ENCODE measurements at regions of chr1 and their contacts with region 1.

Region 1: GRCh38 chr1:89454845-89455521 is 69.6 kb upstream of the LRRC8B start:
- DNase-seq: peak; percentile 71
- H3K4me3 Mint-ChIP-seq: no peak overlapping the region
- H3K27ac Mint-ChIP-seq: no peak overlapping the region
- H3K4me1 Mint-ChIP-seq: peaks cover 22% of the 10 kb centered on the region
- H3K27me3 Mint-ChIP-seq: peaks cover 21% of the 10 kb centered on the region

Region 2: DNA sequence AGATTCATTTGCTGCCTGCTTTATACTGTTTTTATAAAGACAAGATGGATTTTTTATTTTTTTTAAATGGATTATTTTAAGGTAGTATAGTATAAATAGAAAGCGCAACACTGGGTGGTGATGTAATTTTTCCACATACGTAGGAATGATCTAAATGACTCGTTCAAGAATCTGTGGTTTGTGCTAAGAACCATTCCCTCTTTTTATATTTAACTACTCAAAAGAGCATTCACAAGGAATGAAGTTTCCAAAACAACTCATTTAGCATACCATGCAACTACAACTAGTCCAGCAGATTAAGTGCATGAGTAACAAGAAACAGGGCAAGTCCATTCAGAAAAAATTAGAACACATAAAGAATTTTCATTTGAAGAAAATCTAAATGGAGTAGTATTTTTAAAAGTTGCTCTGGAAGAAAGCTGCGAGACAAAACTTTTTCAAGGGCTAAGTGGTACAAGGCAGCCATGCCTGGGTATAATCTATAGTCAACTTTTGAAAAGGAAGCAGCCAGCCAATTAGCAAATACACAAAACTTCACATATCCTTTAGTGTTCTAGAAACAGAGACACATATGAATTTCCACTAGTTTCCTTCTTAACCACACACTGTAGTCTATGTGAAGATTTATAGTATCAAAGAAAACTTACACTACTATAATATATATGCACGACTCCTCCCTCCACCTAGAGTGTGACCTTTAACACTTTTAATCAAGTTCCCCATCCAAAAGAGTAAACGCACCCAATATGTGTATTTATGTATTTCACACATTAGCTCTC is 587.1 kb before region 1 on chr1:
- CTCF ChIA-PET with region 1: no interaction called
- POLR2A ChIA-PET with region 1: no interaction called
- intact Hi-C with region 1: loop called (anchors 1 kb)
- DNase-seq: no peak
- H3K4me3 Mint-ChIP-seq: no peak overlapping the region
- H3K27ac Mint-ChIP-seq: peak overlapping the region; percentile 62
- H3K4me1 Mint-ChIP-seq: peaks cover 41% of the 10 kb centered on the region
- H3K27me3 Mint-ChIP-seq: no peaks in the 10 kb centered on the region

Region 3: DNA sequence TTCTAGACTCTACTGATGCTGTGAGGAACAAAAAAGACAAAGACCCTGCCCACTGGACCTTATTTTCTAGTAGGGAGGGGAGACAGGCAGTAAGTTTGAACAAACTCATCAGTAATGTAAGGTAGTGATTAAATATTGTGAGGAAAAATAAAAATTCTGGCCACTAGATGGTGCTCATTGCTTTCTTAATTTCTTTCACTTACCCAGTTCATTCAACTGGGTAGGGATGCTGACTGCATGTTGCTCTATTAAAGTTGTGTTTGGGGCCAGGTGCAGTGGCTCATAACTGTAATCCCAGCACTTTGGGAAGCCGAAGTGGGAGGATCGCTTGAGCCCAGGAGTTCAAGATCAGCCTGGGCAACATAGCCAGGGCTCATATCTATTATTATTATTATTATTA is 456.3 kb before region 1 on chr1:
- CTCF ChIA-PET with region 1: interaction called, 22 read pairs
- POLR2A ChIA-PET with region 1: no interaction called
- intact Hi-C with region 1: loop called (anchors 1 kb)
- DNase-seq: no peak
- H3K4me3 Mint-ChIP-seq: no peak overlapping the region
- H3K27ac Mint-ChIP-seq: no peak overlapping the region
- H3K4me1 Mint-ChIP-seq: peaks cover 27% of the 10 kb centered on the region
- H3K27me3 Mint-ChIP-seq: no peaks in the 10 kb centered on the region

Region 4: DNA sequence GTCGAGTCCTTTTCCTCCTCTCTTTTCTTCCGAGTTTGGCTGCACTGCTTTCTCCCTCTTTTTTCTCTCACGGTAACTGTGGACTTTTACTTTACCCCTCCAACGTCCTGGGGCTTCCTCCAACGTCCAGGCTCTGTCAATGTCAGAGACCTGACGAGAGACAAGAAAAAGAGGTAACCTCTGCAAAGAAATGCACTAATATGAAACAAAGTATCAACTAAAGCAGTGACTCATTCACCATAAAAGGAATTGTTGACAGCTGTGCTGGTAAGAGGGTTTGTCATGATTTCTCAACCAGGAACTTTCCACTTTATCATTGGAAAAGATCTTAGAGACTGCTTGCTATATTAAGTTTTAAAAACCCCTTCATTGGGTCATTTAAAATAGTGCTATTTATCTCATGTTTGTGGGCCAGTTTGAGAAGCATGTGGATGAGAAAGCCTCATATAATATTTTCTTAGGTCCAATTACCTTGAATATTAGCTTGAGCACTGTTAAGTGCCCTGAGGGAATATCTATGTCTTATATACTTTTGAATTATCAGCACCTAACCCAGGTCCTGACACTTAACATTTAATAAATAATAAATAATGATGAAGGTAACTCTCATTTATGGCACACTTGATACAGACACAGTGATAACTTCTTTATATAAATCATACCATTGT is 328.9 kb before region 1 on chr1 and contains the start of gene GBP2:
- CTCF ChIA-PET with region 1: interaction called, 5 read pairs
- POLR2A ChIA-PET with region 1: no interaction called
- intact Hi-C with region 1: loop called (anchors 1 kb)
- DNase-seq: peak; percentile 51
- H3K4me3 Mint-ChIP-seq: peak within 1 kb of the TSS; percentile 95
- H3K27ac Mint-ChIP-seq: peak within 1 kb of the TSS; percentile 99
- H3K4me1 Mint-ChIP-seq: peaks cover 54% of the 10 kb centered on the region
- H3K27me3 Mint-ChIP-seq: no peaks in the 10 kb centered on the region
- total RNA-seq, gene GBP2: 396 to 403 TPM

Region 5: GRCh38 chr1:89211035-89211634 is 243.8 kb before region 1 on chr1:
- CTCF ChIA-PET with region 1: no interaction called
- POLR2A ChIA-PET with region 1: no interaction called
- intact Hi-C with region 1: no loop called
- DNase-seq: no peak
- H3K4me3 Mint-ChIP-seq: no peak overlapping the region
- H3K27ac Mint-ChIP-seq: no peak overlapping the region
- H3K4me1 Mint-ChIP-seq: no peaks in the 10 kb centered on the region
- H3K27me3 Mint-ChIP-seq: no peaks in the 10 kb centered on the region

Region 6: GRCh38 chr1:89286549-89287180 is 168.3 kb before region 1 on chr1:
- CTCF ChIA-PET with region 1: no interaction called
- POLR2A ChIA-PET with region 1: interaction called, 3 read pairs
- intact Hi-C with region 1: loop called (anchors 5 kb)
- DNase-seq: no peak
- H3K4me3 Mint-ChIP-seq: peak overlapping the region; percentile 38
- H3K27ac Mint-ChIP-seq: peak overlapping the region; percentile 78
- H3K4me1 Mint-ChIP-seq: peaks cover 65% of the 10 kb centered on the region
- H3K27me3 Mint-ChIP-seq: no peaks in the 10 kb centered on the region

Region 7: DNA sequence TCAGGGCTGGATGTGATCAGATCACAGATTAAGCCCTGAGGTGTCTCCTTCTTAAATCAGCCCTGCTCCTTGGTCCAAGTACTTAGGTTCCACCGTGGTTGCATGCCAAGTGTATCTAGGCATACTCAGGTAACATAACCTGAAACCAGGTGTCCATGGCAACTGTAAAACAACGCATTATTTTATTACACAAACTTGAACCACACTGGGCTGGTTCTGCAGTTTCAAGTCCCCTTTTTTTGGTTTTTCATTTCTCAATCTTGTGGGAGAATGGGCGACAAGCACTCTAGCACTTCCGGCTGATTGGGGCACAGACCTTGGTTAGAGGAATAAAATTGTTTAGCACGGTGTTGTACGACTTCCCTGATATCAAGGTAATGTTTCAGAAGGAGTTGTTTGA is 25.9 kb before region 1 on chr1:
- CTCF ChIA-PET with region 1: interaction called, 6 read pairs
- POLR2A ChIA-PET with region 1: interaction called, 7 read pairs
- intact Hi-C with region 1: loop called (anchors 1 kb)
- DNase-seq: no peak
- H3K4me3 Mint-ChIP-seq: no peak overlapping the region
- H3K27ac Mint-ChIP-seq: no peak overlapping the region
- H3K4me1 Mint-ChIP-seq: peaks cover 21% of the 10 kb centered on the region
- H3K27me3 Mint-ChIP-seq: no peaks in the 10 kb centered on the region

Region 8: GRCh38 chr1:89499320-89499719 is 44.3 kb after region 1 on chr1:
- CTCF ChIA-PET with region 1: no interaction called
- POLR2A ChIA-PET with region 1: no interaction called
- intact Hi-C with region 1: no loop called
- DNase-seq: no peak
- H3K4me3 Mint-ChIP-seq: no peak overlapping the region
- H3K27ac Mint-ChIP-seq: no peak overlapping the region
- H3K4me1 Mint-ChIP-seq: no peaks in the 10 kb centered on the region
- H3K27me3 Mint-ChIP-seq: peaks cover 2% of the 10 kb centered on the region

Region 9: DNA sequence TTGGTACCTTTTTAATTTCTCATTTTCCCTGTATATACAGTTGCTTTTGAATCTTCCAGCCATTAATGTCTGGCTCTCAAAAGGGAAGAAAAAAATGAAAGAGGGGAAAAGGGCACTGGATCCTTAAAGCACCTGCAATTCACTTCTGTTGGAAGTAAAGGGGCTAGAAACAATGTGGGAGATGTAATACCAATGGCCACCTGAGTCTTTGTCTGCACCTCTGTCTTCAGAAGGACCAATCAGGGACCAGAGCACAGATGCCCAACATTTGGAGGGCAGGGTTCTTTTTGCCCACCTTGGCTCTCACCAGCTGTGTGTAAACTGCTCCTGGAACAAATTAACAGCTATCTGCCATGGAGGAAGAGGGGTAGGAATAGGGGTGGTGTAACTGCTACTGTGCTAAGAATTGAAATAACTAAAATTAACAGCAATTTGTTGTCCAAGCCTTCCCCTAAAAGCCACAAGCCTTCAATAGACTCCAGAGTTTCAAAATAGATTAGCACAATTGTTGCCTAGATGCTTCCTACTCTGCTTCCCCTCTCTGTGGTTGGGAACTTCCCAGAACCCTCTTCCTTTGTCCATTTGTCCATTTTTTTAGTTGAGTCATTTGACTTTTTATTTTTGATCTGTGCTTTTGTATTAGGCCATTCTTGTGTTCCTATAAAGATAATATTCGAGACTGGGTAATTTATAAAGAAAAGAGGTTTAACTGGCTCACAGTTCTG is 58.2 kb after region 1 on chr1:
- CTCF ChIA-PET with region 1: no interaction called
- POLR2A ChIA-PET with region 1: no interaction called
- intact Hi-C with region 1: no loop called
- DNase-seq: no peak
- H3K4me3 Mint-ChIP-seq: no peak overlapping the region
- H3K27ac Mint-ChIP-seq: no peak overlapping the region
- H3K4me1 Mint-ChIP-seq: peaks cover 14% of the 10 kb centered on the region
- H3K27me3 Mint-ChIP-seq: peaks cover 10% of the 10 kb centered on the region